Transverse colon (tissue), 4 donors: ENCODE measurements at regions of chr11 and their contacts with region 1.

Region 1: GRCh38 chr11:33161120-33162005 is at the start of gene CSTF3:
- DNase-seq: peak; percentile 100
- H3K4me3 ChIP-seq: peak within 1 kb of the TSS; percentile 60 to 89 (median 83)
- H3K27ac ChIP-seq: peak within 1 kb of the TSS; percentile 80 to 90 (median 85)
- H3K4me1 ChIP-seq: peaks cover 5 to 41% (median 18%) of the 10 kb centered on the region in 4 donors
- H3K27me3 ChIP-seq: no peaks in the 10 kb centered on the region
- CTCF ChIP-seq: peak; percentile 44 to 96 (median 64)
- EP300 ChIP-seq: no peak
- POLR2A ChIP-seq: peak; percentile 74
- total RNA-seq, gene CSTF3: 2.2 to 167 (median 14.2) TPM

Region 2: GRCh38 chr11:33307984-33308383 is 146.6 kb after region 1 on chr11:
- in situ Hi-C with region 1: no loop called
- intact Hi-C with region 1: no loop called
- DNase-seq: no peak
- H3K4me3 ChIP-seq: no peak overlapping the region
- H3K27ac ChIP-seq: no peak overlapping the region
- H3K4me1 ChIP-seq: peaks cover 0 to 24% (median 2%) of the 10 kb centered on the region in 4 donors
- H3K27me3 ChIP-seq: no peaks in the 10 kb centered on the region
- CTCF ChIP-seq: no peak
- EP300 ChIP-seq: no peak
- POLR2A ChIP-seq: no peak

Region 3: GRCh38 chr11:33736148-33736809 is 574.9 kb after region 1 on chr11 and contains the start of gene CD59:
- in situ Hi-C with region 1: loop called in 2 of 4 experiments (anchors 25 kb)
- intact Hi-C with region 1: no loop called
- DNase-seq: peak; percentile 98
- H3K4me3 ChIP-seq: peak within 1 kb of the TSS; percentile 54 to 95 (median 80)
- H3K27ac ChIP-seq: peak within 1 kb of the TSS; percentile 87 to 96 (median 92)
- H3K4me1 ChIP-seq: peaks cover 11 to 49% (median 38%) of the 10 kb centered on the region in 4 donors
- H3K27me3 ChIP-seq: no peaks in the 10 kb centered on the region
- CTCF ChIP-seq: peak in 2 of 5 experiments; percentile 2 to 8
- EP300 ChIP-seq: no peak
- POLR2A ChIP-seq: peak; percentile 95
- total RNA-seq, gene CD59: 64.7 to 213 (median 170) TPM

Region 4: DNA sequence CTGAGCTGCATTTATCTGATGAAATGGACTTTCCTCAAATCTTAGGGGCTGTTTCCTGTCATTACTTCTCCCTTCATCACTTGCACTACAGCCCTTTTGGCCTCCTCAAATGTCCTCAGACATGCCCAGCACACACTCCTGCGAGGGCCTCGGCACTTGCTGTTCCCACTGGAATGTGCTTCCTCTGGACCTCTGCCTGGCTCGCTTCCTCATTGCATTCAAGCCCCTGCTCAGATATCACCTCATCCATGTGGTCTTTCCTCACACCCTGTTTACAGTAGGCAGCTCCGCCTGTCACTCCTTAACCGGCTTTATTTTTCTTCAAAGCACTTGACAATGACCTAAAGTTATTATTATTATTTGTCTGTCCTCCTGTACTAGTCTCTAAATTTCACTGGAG is 953.1 kb after region 1 on chr11:
- in situ Hi-C with region 1: no loop called
- intact Hi-C with region 1: no loop called
- DNase-seq: no peak
- H3K4me3 ChIP-seq: no peak overlapping the region
- H3K27ac ChIP-seq: no peak overlapping the region
- H3K4me1 ChIP-seq: no peaks in the 10 kb centered on the region
- H3K27me3 ChIP-seq: no peaks in the 10 kb centered on the region
- CTCF ChIP-seq: no peak
- EP300 ChIP-seq: no peak
- POLR2A ChIP-seq: no peak